GM12878 (cell line): ENCODE measurements at regions of chr4 and their contacts with region 1.

Region 1: DNA sequence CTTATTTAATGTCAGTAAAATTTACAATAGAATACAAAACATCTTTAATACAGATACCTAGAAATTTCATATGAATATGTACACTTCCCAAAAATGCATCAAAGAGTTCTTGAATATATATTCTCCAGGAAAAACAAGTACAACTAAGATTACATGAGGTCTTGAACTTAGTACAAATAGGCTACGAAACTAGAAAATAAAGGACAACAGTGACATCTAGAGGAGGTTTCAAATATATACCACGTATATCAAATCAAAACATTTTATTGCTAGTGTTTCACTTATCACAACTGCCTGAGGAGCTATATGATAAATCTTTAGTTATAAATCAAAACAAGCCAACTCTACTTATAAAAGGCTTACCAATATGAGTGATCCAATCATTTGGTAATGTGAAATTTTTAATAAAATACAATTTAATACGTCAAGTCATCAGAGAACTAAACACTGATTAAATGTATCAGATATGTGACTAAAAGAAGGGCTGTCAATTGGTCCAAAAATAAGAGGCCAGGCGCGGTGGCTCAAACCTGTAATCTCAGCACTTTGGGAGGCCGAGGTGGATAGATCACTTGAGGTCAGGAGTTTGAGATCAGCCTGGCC is 36.6 kb downstream of the ANAPC10 start:
- DNase-seq: no peak
- ATAC-seq: peak; percentile 83
- H3K4me3 ChIP-seq: no peak overlapping the region
- H3K27ac ChIP-seq: no peak overlapping the region
- H3K4me1 ChIP-seq: no peaks in the 10 kb centered on the region
- H3K27me3 ChIP-seq: no peaks in the 10 kb centered on the region
- CTCF ChIP-seq: peak in 2 of 3 experiments; percentile 25 to 58; a peak in 2 of 6 replicates
- EP300 ChIP-seq: no peak
- POLR2A ChIP-seq: no peak
- RAD21 ChIP-seq: peak; percentile 65

Region 2: GRCh38 chr4:144174401-144175067 is 886.9 kb before region 1 on chr4:
- CTCF ChIA-PET with region 1: interaction called, 8 read pairs
- POLR2A ChIA-PET with region 1: no interaction called
- RAD21 ChIA-PET with region 1: interaction called, 4 read pairs
- SMC1A ChIA-PET with region 1: interaction called, 14 read pairs
- in situ Hi-C with region 1: loop called (anchors 5 kb)
- intact Hi-C with region 1: loop called (anchors 1 kb)
- DNase-seq: peak; percentile 16
- ATAC-seq: peak; percentile 86
- H3K4me3 ChIP-seq: no peak overlapping the region
- H3K27ac ChIP-seq: no peak overlapping the region
- H3K4me1 ChIP-seq: no peaks in the 10 kb centered on the region
- H3K27me3 ChIP-seq: no peaks in the 10 kb centered on the region; a peak in 1 of 4 replicates
- CTCF ChIP-seq: peak; percentile 32 to 63 (median 40); a peak in 5 of 6 replicates
- EP300 ChIP-seq: no peak
- POLR2A ChIP-seq: no peak
- RAD21 ChIP-seq: peak; percentile 83

Region 3: GRCh38 chr4:144645631-144646522 is 415.5 kb before region 1 on chr4 and contains the start of gene HHIP:
- CTCF ChIA-PET with region 1: no interaction called
- POLR2A ChIA-PET with region 1: no interaction called
- RAD21 ChIA-PET with region 1: interaction called, 3 read pairs
- SMC1A ChIA-PET with region 1: interaction called, 9 read pairs
- in situ Hi-C with region 1: no loop called
- intact Hi-C with region 1: loop called (anchors 5 kb)
- DNase-seq: no peak
- ATAC-seq: peak; percentile 55
- H3K4me3 ChIP-seq: peak within 1 kb of the TSS; percentile 8; the same call in 1 of the 2 replicates
- H3K27ac ChIP-seq: no peak within 1 kb of the TSS
- H3K4me1 ChIP-seq: no peaks in the 10 kb centered on the region
- H3K27me3 ChIP-seq: peaks cover 3 to 17% of the 10 kb centered on the region in 2 experiments; a peak in 3 of 4 replicates
- CTCF ChIP-seq: no peak
- EP300 ChIP-seq: no peak
- POLR2A ChIP-seq: peak; percentile 31; the same call in 1 of the 2 replicates
- RAD21 ChIP-seq: no peak
- polyA plus RNA-seq, gene HHIP: 0.13 to 0.16 TPM

Region 4: GRCh38 chr4:144906181-144906925 is 155.1 kb before region 1 on chr4:
- CTCF ChIA-PET with region 1: interaction called, 16 read pairs
- POLR2A ChIA-PET with region 1: no interaction called
- RAD21 ChIA-PET with region 1: interaction called, 6 read pairs
- SMC1A ChIA-PET with region 1: interaction called, 10 read pairs
- in situ Hi-C with region 1: no loop called
- intact Hi-C with region 1: no loop called
- DNase-seq: peak; percentile 38
- ATAC-seq: peak; percentile 81
- H3K4me3 ChIP-seq: no peak overlapping the region
- H3K27ac ChIP-seq: peak overlapping the region; percentile 55; the same call in 1 of the 2 replicates
- H3K4me1 ChIP-seq: peaks cover 15% of the 10 kb centered on the region
- H3K27me3 ChIP-seq: no peaks in the 10 kb centered on the region
- CTCF ChIP-seq: no peak
- EP300 ChIP-seq: peak; percentile 44 to 74; a peak in 2 of 4 replicates
- POLR2A ChIP-seq: no peak
- RAD21 ChIP-seq: no peak

Region 5: GRCh38 chr4:145047151-145047550 is 14.3 kb before region 1 on chr4:
- CTCF ChIA-PET with region 1: interaction called, 7 read pairs
- POLR2A ChIA-PET with region 1: no interaction called
- RAD21 ChIA-PET with region 1: interaction called, 5 read pairs
- SMC1A ChIA-PET with region 1: interaction called, 23 read pairs
- in situ Hi-C with region 1: no loop called
- intact Hi-C with region 1: no loop called
- DNase-seq: peak; percentile 21
- ATAC-seq: peak; percentile 86
- H3K4me3 ChIP-seq: no peak overlapping the region
- H3K27ac ChIP-seq: peak overlapping the region; percentile 38; the same call in 1 of the 2 replicates
- H3K4me1 ChIP-seq: 0 out of 2 replicates have a peak, but pooled peaks cover 4% of the 10 kb centered on the region
- H3K27me3 ChIP-seq: no peaks in the 10 kb centered on the region
- CTCF ChIP-seq: no peak; a peak in 1 of 6 replicates
- EP300 ChIP-seq: peak in 1 of 2 experiments; percentile 26; a peak in 1 of 4 replicates
- POLR2A ChIP-seq: no peak
- RAD21 ChIP-seq: peak; percentile 14; the same call in 1 of the 2 replicates

Region 6: DNA sequence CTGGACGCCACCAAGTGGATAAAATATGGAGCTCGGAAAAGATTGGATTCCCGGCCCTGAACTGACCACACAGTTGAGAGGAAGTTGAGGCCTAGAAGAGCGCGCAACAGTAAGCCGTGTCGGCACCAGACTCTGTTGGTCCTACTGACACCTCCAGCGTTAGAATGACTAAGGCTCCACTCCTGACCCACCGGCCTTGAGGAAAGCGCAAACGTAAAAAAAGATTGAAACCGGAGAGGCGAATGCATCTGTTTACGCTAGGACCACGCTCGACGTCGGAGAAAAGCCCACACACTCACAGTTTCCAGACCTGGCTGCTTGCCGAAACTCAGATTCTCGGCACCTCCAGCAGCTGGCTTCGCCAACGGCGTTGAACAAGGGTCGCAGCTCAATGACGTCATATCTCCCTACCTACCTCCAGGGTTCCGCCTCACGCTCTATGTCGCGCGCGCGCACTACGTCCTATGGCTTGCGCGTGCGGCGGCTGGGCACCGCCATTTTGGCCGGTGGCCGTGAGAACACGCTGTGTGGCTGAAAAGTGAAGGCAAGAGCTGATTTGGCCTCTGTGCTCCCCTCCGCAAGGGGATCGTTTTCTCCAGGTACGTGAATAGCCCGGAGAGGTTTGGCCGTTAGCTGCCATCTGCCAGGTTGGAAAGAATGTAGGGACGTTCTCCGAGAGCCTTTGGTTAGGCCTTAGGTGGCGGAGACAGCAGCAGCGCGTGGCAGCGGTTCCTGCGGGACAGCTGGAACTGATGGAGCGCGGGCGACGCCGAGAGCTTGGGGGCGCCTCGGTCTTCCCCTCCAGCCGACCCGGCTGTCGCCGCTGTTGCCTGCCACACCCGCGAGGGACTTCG is 36.6 kb after region 1 on chr4 and contains the starts of genes ABCE1 and ANAPC10:
- CTCF ChIA-PET with region 1: interaction called, 15 read pairs
- POLR2A ChIA-PET with region 1: interaction called, 3 read pairs
- RAD21 ChIA-PET with region 1: interaction called, 4 read pairs
- SMC1A ChIA-PET with region 1: interaction called, 7 read pairs
- in situ Hi-C with region 1: no loop called
- intact Hi-C with region 1: no loop called
- DNase-seq: peak; percentile 87
- ATAC-seq: peak; percentile 83
- H3K4me3 ChIP-seq: peak within 1 kb of the TSS; percentile 94
- H3K27ac ChIP-seq: peak within 1 kb of the TSS; percentile 86
- H3K4me1 ChIP-seq: peaks cover 10% of the 10 kb centered on the region
- H3K27me3 ChIP-seq: no peaks in the 10 kb centered on the region
- CTCF ChIP-seq: no peak; a peak in 1 of 6 replicates
- EP300 ChIP-seq: peak in 1 of 2 experiments; percentile 58; a peak in 1 of 4 replicates
- POLR2A ChIP-seq: peak; percentile 95
- RAD21 ChIP-seq: no peak
- polyA plus RNA-seq, gene ABCE1: 75.9 to 108 TPM
- polyA plus RNA-seq, gene ANAPC10: 60.2 to 73.7 TPM

Region 7: DNA sequence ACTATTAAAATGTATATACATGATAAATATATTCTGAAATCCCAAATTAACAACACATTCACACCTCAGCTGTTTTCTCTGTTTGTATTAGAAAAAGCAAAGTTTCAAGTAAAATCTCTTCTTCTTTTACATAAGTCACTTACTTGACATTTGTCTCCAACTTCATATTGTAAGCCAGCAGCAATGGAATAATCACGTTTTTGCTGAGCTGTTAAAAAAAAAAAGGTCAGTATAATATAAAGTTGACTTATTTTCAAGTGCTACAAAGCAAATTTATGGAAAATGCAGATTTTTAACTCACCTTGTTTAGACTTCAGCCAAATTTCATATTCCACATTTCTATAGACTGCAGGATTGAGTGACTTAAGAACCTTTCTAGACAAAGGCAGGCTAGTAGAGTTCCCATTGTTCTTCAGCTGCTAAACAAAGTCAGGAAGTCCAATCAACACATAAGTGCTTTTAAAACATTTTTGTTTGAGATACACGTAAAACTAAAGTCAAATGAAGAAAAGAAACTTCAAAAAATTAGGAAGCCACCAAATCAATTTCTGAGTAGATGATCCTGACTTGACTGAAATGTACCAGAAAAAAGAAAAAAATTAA is 94.0 kb after region 1 on chr4:
- CTCF ChIA-PET with region 1: no interaction called
- POLR2A ChIA-PET with region 1: no interaction called
- RAD21 ChIA-PET with region 1: no interaction called
- SMC1A ChIA-PET with region 1: no interaction called
- in situ Hi-C with region 1: no loop called
- intact Hi-C with region 1: no loop called
- DNase-seq: no peak
- ATAC-seq: no peak
- H3K4me3 ChIP-seq: no peak overlapping the region
- H3K27ac ChIP-seq: no peak overlapping the region
- H3K4me1 ChIP-seq: peaks cover 7% of the 10 kb centered on the region; the same call in 1 of the 2 replicates
- H3K27me3 ChIP-seq: no peaks in the 10 kb centered on the region
- CTCF ChIP-seq: no peak
- EP300 ChIP-seq: no peak
- POLR2A ChIP-seq: no peak
- RAD21 ChIP-seq: no peak